ENCODE measurements at regions of chr21 and their contacts with region 1.

Region 1: GRCh38 chr21:36141513-36141925 is 6.6 kb downstream of the CBR3 start:
- DNase-seq: peak in 8 of 10 donors; percentile 59 to 90 (median 70)
- H3K4me3 ChIP-seq: peak overlapping the region in 1 of 59 donors; percentile 14
- H3K27ac ChIP-seq: peak overlapping the region in 8 of 59 donors; percentile 0 to 41 (median 13)
- H3K27me3 ChIP-seq: no peaks in the 10 kb centered on the region
- CTCF ChIP-seq: peak; percentile 77 to 94 (median 88)

Region 2: DNA sequence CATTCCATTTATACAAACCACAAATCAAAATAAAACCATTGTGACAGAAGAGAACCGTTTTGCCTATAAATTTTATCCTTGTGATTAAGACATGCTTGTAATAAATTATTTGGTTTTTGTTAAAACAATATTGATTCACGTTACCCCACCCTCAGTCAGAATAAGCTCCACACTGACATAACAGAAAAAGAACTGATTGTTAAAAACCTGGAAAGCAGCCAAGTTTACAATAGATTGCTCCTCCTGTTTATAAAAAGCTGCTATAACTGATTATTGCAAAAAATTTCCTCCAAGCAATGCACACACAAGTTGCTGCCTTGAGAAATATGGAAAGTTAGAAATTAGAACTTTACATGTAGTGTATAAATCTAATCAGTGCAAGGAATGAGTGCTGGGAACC is 344.7 kb before region 1 on chr21:
- intact Hi-C with region 1: no loop called
- DNase-seq: no peak
- H3K4me3 ChIP-seq: peak overlapping the region in 2 of 59 donors; percentile 9 to 28
- H3K27ac ChIP-seq: no peak overlapping the region
- H3K27me3 ChIP-seq: peaks cover 0 to 4% (median 0%) of the 10 kb centered on the region in 45 donors
- CTCF ChIP-seq: no peak

Region 3: DNA sequence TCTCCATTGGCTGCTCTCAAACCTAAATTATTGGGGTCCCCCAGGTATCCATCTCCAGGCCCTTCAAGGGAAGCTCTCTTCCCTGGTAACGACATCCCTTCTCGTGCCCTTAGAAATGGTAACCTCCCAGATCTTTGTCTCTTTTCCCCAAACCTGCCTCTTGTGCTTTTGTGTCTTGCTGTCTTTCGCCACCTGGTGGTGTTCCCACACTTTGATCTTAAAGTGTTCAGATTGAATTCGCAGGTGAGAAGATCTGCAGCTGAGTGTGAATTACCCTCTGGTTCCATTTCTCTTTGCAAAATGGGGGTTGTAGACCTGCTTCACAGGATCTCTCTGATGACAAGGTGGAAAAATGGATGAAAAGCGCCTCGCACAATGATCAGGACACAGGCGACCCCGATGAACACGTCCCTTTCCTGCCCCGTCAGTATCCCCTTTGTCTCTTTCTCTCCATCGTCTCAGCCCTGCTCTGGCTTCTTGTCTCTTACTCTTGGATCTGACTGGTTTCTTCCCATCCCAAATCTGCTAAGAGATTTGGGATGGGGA is 68.2 kb after region 1 on chr21:
- intact Hi-C with region 1: loop called in 1 of 2 experiments (anchors 5 kb)
- DNase-seq: peak in 2 of 10 donors; percentile 25 to 74
- H3K4me3 ChIP-seq: no peak overlapping the region
- H3K27ac ChIP-seq: peak overlapping the region in 1 of 59 donors; percentile 53
- H3K27me3 ChIP-seq: no peaks in the 10 kb centered on the region
- CTCF ChIP-seq: peak in 49 of 56 donors; percentile 17 to 60 (median 40)

Region 4: GRCh38 chr21:36330904-36331303 is 189.4 kb after region 1 on chr21:
- intact Hi-C with region 1: loop called in 1 of 2 experiments (anchors 2 kb)
- DNase-seq: peak in 6 of 10 donors; percentile 26 to 61 (median 46)
- H3K4me3 ChIP-seq: no peak overlapping the region
- H3K27ac ChIP-seq: peak overlapping the region in 4 of 59 donors; percentile 7 to 67 (median 34)
- H3K27me3 ChIP-seq: no peaks in the 10 kb centered on the region
- CTCF ChIP-seq: peak in 55 of 56 donors; percentile 22 to 86 (median 66)

Measured in dorsolateral prefrontal cortex (tissue), 120 donors.